ENCODE measurements at regions of chr21 and their contacts with region 1.

Region 1: DNA sequence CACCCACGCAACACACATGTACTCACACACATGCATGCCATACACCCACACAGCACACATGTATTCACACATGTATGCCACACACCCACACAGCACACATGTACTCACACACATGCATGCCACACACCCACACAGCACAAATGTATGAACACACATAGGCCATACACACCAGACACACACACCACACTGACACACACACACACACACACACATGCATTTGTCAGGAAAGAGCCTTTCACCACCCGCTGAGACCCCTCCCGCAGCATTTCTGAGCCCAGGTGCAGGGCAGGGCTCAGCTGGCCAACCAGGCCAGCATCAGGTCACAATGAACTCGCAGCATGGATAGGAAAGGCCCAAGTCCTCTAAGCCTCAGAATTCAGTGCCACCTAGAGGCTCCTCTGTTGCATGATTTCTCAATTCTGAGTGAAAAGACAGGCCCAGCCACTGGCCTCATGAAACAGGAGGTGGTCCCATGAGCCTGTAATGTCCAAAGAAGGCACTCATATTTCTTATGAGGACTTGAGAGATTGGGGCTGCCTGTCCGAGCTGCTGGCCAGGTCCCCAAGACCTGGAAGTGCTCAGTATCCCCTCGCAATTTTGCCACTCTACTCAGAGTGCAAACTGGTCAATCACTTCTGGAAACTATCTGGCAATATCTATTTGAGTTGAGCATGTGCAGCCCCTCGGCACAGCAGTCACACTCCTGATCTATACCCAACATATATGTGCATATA is 57.3 kb downstream of the PSMG1 start:
- DNase-seq: peak; percentile 84
- H3K4me3 ChIP-seq: no peak overlapping the region
- H3K27ac ChIP-seq: no peak overlapping the region
- H3K4me1 ChIP-seq: no peaks in the 10 kb centered on the region
- H3K27me3 ChIP-seq: no peaks in the 10 kb centered on the region

Region 2: DNA sequence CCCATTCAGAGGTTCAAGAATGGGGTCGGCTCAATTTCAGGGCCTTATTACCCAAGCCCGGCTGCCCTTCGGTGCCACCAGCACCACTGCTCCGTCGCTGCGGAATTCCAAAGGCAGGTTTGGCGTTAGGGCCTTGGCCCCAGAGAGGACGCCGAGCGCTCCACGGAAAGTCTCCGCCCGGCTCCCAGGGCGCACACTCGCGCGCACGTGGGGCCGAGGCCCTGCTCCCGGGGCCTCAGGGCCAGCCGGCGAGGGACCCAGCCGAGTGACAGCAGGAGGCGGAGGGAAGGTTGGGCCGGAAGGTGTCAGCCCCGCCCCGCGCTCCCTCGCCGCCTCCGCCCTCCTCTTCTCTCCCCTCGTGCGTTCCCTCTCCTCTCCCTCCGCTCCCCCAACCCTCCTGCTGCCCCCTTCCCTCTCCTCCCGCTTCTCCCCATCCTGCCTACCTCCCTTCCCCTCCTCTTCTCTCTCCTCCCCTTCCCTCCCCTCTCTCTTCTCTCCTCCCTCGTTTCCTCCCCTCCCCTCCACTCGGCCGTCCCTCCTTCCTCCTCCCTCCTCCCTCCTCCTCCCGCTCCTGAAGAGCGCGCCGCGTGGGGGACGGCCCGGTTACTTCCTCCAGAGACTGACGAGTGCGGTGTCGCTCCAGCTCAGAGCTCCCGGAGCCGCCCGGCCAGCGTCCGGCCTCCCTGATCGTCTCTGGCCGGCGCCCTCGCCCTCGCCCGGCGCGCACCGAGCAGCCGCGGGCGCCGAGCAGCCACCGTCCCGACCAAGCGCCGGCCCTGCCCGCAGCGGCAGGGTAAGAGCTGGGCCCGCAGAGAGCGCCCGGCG is 320.4 kb before region 1 on chr21 and contains the start of gene ETS2:
- in situ Hi-C with region 1: loop called (anchors 10 kb)
- DNase-seq: peak; percentile 89
- H3K4me3 ChIP-seq: peak within 1 kb of the TSS; percentile 82
- H3K27ac ChIP-seq: no peak within 1 kb of the TSS
- H3K4me1 ChIP-seq: peaks cover 14% of the 10 kb centered on the region
- H3K27me3 ChIP-seq: no peaks in the 10 kb centered on the region
- total RNA-seq, gene ETS2: 4.4 and 7.0 TPM in 2 replicates